ENCODE measurements at regions of chr7 and their contacts with region 1.

Region 1: GRCh38 chr7:134854816-134855215 is 75.4 kb downstream of the CALD1 start:
- DNase-seq: no peak
- ATAC-seq: peak in 6 of 8 donors; percentile 29 to 72 (median 42)
- H3K4me3 ChIP-seq: no peak overlapping the region
- H3K27ac ChIP-seq: peak overlapping the region in 5 of 10 donors; percentile 11 to 70 (median 44)
- H3K4me1 ChIP-seq: peaks cover 7 to 81% (median 62%) of the 10 kb centered on the region in 9 donors
- H3K27me3 ChIP-seq: no peaks in the 10 kb centered on the region
- CTCF ChIP-seq: no peak

Region 2: DNA sequence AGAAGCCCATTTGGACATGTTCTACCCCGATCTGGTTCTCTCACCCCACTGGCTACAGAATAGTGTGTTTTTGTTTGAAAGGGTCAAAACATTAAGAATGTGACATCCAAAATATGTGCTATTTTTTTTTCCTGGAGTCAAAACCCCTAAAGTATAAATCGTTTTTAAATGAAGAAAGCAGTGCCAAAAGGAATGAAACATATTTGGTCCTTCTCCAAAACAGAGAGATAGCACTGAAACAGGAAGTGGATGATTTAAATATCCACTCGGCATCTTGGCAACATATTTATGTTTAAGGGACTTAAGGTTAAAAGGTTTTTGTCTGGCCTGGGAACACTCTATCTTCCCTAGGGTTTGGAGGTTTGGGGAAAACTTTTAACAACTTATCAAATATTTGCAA is 43.1 kb before region 1 on chr7:
- intact Hi-C with region 1: loop called in 1 of 10 experiments (anchors 5 kb)
- DNase-seq: no peak
- ATAC-seq: peak in 5 of 8 donors; percentile 34 to 53 (median 40)
- H3K4me3 ChIP-seq: no peak overlapping the region
- H3K27ac ChIP-seq: peak overlapping the region in 8 of 10 donors; percentile 19 to 77 (median 54)
- H3K4me1 ChIP-seq: peaks cover 10 to 94% (median 72%) of the 10 kb centered on the region in 9 donors
- H3K27me3 ChIP-seq: no peaks in the 10 kb centered on the region
- CTCF ChIP-seq: no peak

Region 3: GRCh38 chr7:134962270-134962780 is 107.5 kb after region 1 on chr7:
- intact Hi-C with region 1: no loop called
- DNase-seq: no peak
- ATAC-seq: no peak
- H3K4me3 ChIP-seq: no peak overlapping the region
- H3K27ac ChIP-seq: peak overlapping the region in 3 of 10 donors; percentile 16 to 25 (median 17)
- H3K4me1 ChIP-seq: peaks cover 0 to 12% (median 0%) of the 10 kb centered on the region in 9 donors
- H3K27me3 ChIP-seq: no peaks in the 10 kb centered on the region
- CTCF ChIP-seq: peak in 1 of 9 donors; percentile 11